Mammary epithelial cell (primary cell): ENCODE measurements at regions of chr16 and their contacts with region 1.

Region 1: GRCh38 chr16:29900102-29900887 is at the start of gene ASPHD1:
- DNase-seq: peak; percentile 84
- H3K4me3 ChIP-seq: peak within 1 kb of the TSS; percentile 61 to 70 (median 68)
- H3K27ac ChIP-seq: no peak within 1 kb of the TSS
- H3K4me1 ChIP-seq: peaks cover 21% of the 10 kb centered on the region
- H3K27me3 ChIP-seq: peaks cover 4% of the 10 kb centered on the region
- CTCF ChIP-seq: no peak
- total RNA-seq, gene ASPHD1: 1.5 to 14.7 TPM

Region 2: DNA sequence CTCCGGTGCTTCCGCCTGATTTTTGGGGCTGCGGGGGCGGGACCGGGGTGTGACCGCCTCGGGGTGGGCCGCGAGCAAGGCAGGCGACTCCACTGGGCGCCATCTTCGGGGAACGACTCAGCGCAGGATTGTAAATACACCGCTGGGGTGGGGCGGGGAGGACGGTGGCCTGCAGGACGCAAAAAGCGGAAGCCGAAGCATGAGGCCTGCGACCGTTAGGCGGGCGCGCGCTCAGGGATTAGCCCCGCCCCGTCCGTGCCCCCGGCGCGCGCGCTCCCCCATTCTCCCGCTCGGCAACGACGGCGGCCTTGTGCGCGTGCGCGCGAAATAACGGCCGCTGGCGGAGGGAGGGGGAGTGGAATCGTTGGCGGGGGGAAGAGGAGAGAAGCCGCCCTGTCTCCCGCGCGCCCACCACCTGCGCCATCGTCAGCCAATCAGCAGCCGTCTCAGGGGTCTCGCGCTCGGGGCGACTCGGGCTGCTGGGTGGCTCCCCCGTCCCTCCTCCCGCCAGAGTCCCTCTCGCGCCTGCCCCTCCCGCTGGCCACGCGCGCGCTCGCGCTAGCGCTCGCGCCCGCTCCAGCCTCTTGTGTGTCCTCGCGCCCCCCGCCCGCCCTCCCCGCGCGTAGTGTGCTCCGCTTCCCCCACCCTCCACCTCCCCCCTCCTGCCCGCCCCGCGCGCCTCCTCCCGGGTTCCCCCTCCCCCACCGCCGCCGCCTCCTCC is 94.8 kb before region 1 on chr16:
- CTCF ChIA-PET with region 1: no interaction called
- dilution Hi-C with region 1: no loop called
- in situ Hi-C with region 1: no loop called
- intact Hi-C with region 1: no loop called
- DNase-seq: peak; percentile 96
- H3K4me3 ChIP-seq: peak overlapping the region; percentile 74 to 89 (median 76)
- H3K27ac ChIP-seq: peak overlapping the region; percentile 56
- H3K4me1 ChIP-seq: peaks cover 31% of the 10 kb centered on the region
- H3K27me3 ChIP-seq: no peaks in the 10 kb centered on the region
- CTCF ChIP-seq: no peak

Region 3: GRCh38 chr16:29862884-29863668 is 37.2 kb before region 1 on chr16 and contains the start of gene CDIPT:
- CTCF ChIA-PET with region 1: no interaction called
- dilution Hi-C with region 1: no loop called
- in situ Hi-C with region 1: no loop called
- intact Hi-C with region 1: loop called (anchors 1 kb)
- DNase-seq: peak; percentile 92
- H3K4me3 ChIP-seq: peak within 1 kb of the TSS; percentile 83 to 97 (median 89)
- H3K27ac ChIP-seq: peak within 1 kb of the TSS; percentile 98
- H3K4me1 ChIP-seq: peaks cover 3% of the 10 kb centered on the region
- H3K27me3 ChIP-seq: no peaks in the 10 kb centered on the region
- CTCF ChIP-seq: peak; percentile 58 to 72
- total RNA-seq, gene CDIPT: 47.8 to 72.2 TPM

Region 4: GRCh38 chr16:30032083-30032819 is 132.0 kb after region 1 on chr16:
- CTCF ChIA-PET with region 1: no interaction called
- dilution Hi-C with region 1: no loop called
- in situ Hi-C with region 1: no loop called
- intact Hi-C with region 1: no loop called
- DNase-seq: peak; percentile 44
- H3K4me3 ChIP-seq: no peak overlapping the region
- H3K27ac ChIP-seq: no peak overlapping the region
- H3K4me1 ChIP-seq: no peaks in the 10 kb centered on the region
- H3K27me3 ChIP-seq: peaks cover 4% of the 10 kb centered on the region
- CTCF ChIP-seq: peak; percentile 68 to 80